ENCODE measurements at regions of chr7 and their contacts with region 1.

Region 1: DNA sequence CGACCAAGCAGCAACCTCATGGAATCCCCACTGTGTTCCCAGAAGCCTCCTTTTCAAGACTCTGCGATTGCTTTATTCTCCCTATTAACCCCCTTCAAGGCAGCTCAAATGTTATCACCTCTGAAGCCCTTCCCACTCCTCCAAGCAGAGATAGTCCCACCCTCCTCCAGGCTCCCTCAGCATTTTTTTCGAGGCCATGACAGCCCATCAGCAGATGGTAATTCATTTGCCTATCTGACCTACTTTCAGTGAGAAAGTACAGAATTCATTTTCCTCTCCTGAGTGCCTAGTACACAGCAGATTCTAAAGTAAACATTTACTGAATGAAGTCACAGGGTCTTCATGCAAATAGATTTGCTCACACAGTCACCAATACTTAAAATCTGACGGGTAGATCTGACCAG is 47.8 kb downstream of the HERPUD2 start:
- DNase-seq: peak in 1 of 2 donors; percentile 21
- ATAC-seq: peak; percentile 60 to 84 (median 72)
- H3K4me3 ChIP-seq: peak overlapping the region in 1 of 10 donors; percentile 0
- H3K27ac ChIP-seq: peak overlapping the region in 9 of 10 donors; percentile 0 to 67 (median 47)
- H3K4me1 ChIP-seq: peaks cover 16 to 62% (median 46%) of the 10 kb centered on the region in 9 donors
- H3K27me3 ChIP-seq: no peaks in the 10 kb centered on the region
- CTCF ChIP-seq: no peak

Region 2: DNA sequence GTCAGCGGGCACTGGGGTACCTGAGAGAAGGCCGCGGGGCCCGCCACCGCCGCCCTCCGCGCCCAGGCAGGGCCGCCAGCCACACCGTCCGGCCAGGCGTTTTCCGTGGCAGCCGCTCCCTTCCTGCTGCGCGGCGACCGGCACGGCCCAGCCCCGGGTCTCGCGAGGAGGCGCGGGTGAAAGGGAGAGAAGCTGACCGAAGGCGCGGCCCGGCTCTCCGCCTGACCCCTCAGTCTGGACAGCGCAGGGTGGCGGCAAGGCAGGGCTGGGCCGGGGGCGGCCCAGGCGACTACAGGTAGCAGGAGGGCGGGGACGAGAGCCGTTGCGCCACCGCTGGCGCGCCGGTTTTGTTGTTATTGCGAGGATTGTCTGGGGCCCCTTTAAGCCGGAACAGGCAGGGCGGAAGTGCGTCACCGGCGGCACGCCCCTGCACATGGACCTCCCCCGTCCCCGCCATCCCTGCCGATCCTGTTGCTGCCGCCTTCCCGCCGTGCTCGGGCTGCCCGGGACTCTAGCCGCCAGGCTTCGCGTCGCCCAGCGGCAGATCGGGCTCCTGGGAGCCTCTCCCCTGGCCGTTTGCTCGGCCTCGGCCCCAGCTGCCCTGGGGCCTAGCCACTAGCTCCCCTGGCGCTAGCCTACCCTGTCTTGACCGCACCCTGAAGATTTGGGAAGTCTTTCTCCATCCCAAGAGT is 47.8 kb after region 1 on chr7 and contains the start of gene HERPUD2:
- intact Hi-C with region 1: loop called in 2 of 10 experiments (anchors 5 kb)
- DNase-seq: peak; percentile 93 to 94
- ATAC-seq: peak; percentile 97 to 98 (median 98)
- H3K4me3 ChIP-seq: peak within 1 kb of the TSS; percentile 66 to 98 (median 96)
- H3K27ac ChIP-seq: peak within 1 kb of the TSS; percentile 92 to 100 (median 98)
- H3K4me1 ChIP-seq: peaks cover 4 to 68% (median 49%) of the 10 kb centered on the region in 9 donors
- H3K27me3 ChIP-seq: no peaks in the 10 kb centered on the region
- CTCF ChIP-seq: no peak
- total RNA-seq, gene HERPUD2: 12.3 to 21.3 (median 17.6) TPM

Region 3: GRCh38 chr7:36165059-36165458 is 517.9 kb after region 1 on chr7:
- intact Hi-C with region 1: no loop called
- DNase-seq: no peak
- ATAC-seq: peak in 1 of 8 donors; percentile 27
- H3K4me3 ChIP-seq: no peak overlapping the region
- H3K27ac ChIP-seq: no peak overlapping the region
- H3K4me1 ChIP-seq: peaks cover 0 to 34% (median 10%) of the 10 kb centered on the region in 9 donors
- H3K27me3 ChIP-seq: no peaks in the 10 kb centered on the region
- CTCF ChIP-seq: no peak